HEK293 (cell line): ENCODE measurements at regions of chr9 and their contacts with region 1.

Region 1: GRCh38 chr9:137034863-137035761 is 3.2 kb upstream of the FUT7 start:
- H3K4me3 ChIP-seq: no peak overlapping the region
- H3K27ac ChIP-seq: no peak overlapping the region
- H3K4me1 ChIP-seq: no peaks in the 10 kb centered on the region
- CTCF ChIP-seq: peak; percentile 93

Region 2: GRCh38 chr9:136775191-136775590 is 259.9 kb before region 1 on chr9:
- CTCF ChIA-PET with region 1: interaction called, 14 read pairs
- POLR2A ChIA-PET with region 1: no interaction called
- H3K4me3 ChIP-seq: no peak overlapping the region
- H3K27ac ChIP-seq: no peak overlapping the region
- H3K4me1 ChIP-seq: no peaks in the 10 kb centered on the region
- CTCF ChIP-seq: no peak

Region 3: DNA sequence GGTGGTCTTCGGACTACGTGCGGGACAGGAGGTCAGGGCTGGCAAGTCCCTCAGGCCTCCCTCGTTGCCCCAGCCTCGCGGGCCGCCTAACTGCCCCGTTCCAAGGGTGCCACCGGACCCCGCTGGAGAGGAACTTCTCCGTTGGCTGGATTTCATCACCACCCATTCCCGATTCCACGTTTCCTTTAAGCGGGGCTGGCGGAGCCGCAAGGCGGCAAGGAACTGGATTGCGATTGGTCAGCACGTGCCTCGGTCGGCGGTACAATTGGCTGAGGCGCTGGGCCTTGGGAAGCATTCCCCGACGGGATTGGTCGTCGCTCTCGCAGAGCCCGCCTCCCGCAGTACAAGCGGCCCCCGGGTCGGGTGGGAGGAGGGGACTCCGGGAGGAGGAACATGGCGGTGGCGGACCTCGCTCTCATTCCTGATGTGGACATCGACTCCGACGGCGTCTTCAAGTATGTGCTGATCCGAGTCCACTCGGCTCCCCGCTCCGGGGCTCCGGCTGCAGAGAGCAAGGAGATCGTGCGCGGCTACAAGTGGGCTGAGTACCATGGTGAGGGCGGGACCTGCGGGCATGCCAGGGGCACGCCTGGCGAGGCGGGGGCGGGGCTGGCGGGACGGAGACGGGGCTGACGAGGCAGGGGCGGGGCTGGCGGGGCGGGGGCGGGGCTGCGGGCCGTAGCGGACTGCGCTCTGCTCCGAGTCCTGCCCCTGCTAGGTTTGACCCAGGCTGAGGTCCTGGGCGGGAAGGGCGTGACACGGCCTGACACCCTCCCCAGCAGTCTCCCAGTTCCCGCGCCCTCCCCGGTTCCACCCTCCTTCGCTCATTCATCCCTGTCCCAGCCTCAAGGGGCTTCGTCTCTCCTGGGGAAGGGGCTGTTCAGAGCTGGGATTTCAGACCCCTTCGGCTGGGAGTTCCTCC is 185.8 kb before region 1 on chr9 and contains the start of gene PHPT1:
- CTCF ChIA-PET with region 1: interaction called, 27 read pairs
- POLR2A ChIA-PET with region 1: interaction called, 4 read pairs
- H3K4me3 ChIP-seq: peak within 1 kb of the TSS; percentile 86
- H3K27ac ChIP-seq: peak within 1 kb of the TSS; percentile 94
- H3K4me1 ChIP-seq: 0 out of 2 replicates have a peak, but pooled peaks cover 4% of the 10 kb centered on the region
- CTCF ChIP-seq: no peak

Region 4: GRCh38 chr9:136949817-136950655 is 85.1 kb before region 1 on chr9:
- CTCF ChIA-PET with region 1: interaction called, 119 read pairs
- POLR2A ChIA-PET with region 1: interaction called, 16 read pairs
- H3K4me3 ChIP-seq: peak overlapping the region; percentile 55
- H3K27ac ChIP-seq: peak overlapping the region; percentile 76
- H3K4me1 ChIP-seq: no peaks in the 10 kb centered on the region; the same call in 1 of the 2 replicates
- CTCF ChIP-seq: peak; percentile 86

Region 5: DNA sequence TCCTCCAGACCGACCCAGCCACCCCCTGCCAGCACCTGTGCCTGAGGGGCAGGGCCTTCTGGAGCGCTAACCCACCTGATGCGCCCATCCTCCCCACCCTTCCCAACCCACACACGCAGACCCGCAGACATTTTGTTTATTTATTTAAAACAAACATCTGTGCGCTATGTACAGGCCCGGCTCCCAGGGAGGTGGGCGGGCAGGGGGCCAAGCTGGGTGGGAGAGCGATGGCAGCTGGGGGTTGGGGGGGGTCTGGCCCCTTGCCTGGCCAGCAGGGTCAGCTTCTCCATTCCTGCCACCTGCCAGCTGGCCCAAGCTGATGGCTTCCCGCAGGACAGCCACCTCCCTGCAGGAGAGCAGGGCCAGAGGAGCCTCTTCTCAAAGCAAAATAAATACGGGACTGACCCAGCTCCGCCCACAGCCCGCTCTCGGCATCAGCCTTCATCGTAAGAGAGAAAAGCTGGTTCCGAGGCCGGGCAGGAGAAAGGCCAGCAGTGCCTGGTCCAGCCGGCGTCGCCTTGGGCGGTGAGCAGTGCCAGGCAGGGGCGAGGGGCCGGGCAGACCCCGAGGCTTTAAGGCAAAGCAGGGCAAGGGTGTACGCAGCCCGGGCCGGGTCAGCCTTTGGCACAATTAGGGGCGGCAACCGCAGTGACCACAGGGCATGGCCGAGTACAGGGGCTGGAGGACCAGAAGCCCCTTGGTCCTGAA is 27.9 kb before region 1 on chr9:
- CTCF ChIA-PET with region 1: interaction called, 38 read pairs
- POLR2A ChIA-PET with region 1: interaction called, 3 read pairs
- H3K4me3 ChIP-seq: no peak overlapping the region
- H3K27ac ChIP-seq: no peak overlapping the region
- H3K4me1 ChIP-seq: peaks cover 3% of the 10 kb centered on the region; the same call in 1 of the 2 replicates
- CTCF ChIP-seq: no peak

Region 6: GRCh38 chr9:137046098-137046787 is 11.1 kb after region 1 on chr9 and contains the start of gene NPDC1:
- CTCF ChIA-PET with region 1: interaction called, 47 read pairs
- POLR2A ChIA-PET with region 1: interaction called, 8 read pairs
- H3K4me3 ChIP-seq: peak within 1 kb of the TSS; percentile 58
- H3K27ac ChIP-seq: peak within 1 kb of the TSS; percentile 79; the same call in 1 of the 2 replicates
- H3K4me1 ChIP-seq: peaks cover 5% of the 10 kb centered on the region; the same call in 1 of the 2 replicates
- CTCF ChIP-seq: peak; percentile 87

Region 7: DNA sequence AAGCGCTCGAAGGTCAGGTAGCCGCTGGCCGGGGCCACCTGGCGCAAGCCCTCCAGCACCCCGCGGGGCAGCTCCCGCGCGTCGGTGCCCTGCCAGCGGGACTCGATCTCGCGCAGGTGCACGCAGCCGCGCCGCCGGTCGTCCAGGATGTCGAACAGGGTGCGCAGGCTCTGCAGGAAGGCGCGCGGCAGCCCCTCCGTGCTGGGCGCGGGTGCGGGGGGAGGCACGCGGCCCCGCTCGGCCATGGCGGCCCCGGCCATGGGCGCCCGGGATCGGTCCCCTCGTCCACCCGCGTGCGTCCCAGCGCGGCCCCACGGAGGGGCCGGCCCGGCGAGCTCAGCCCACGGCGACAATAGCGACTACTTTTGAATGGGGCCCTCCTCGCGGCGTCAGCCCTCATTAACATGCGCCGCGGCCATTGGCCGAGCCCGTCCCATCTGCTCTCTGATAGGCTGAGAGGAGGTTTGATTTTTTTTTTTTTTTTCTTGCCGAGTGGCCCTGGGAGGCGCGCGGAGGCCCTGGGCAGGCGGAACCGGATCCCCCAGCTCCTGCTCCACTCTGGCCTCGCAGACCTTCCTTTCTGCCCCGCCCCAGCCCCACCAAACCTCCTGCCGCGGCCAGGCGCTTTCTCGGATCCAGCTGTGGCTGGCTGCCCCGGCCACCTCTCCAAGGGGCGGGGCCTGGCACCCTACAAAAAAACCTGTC is 35.2 kb after region 1 on chr9 and contains the start of gene SAPCD2:
- CTCF ChIA-PET with region 1: interaction called, 86 read pairs
- POLR2A ChIA-PET with region 1: interaction called, 3 read pairs
- H3K4me3 ChIP-seq: peak within 1 kb of the TSS; percentile 38
- H3K27ac ChIP-seq: peak within 1 kb of the TSS; percentile 71
- H3K4me1 ChIP-seq: peaks cover 10% of the 10 kb centered on the region; the same call in 1 of the 2 replicates
- CTCF ChIP-seq: no peak

Region 8: GRCh38 chr9:137186385-137186784 is 151.3 kb after region 1 on chr9:
- CTCF ChIA-PET with region 1: no interaction called
- POLR2A ChIA-PET with region 1: no interaction called
- H3K4me3 ChIP-seq: no peak overlapping the region
- H3K27ac ChIP-seq: no peak overlapping the region
- H3K4me1 ChIP-seq: peaks cover 11% of the 10 kb centered on the region
- CTCF ChIP-seq: no peak

Region 9: GRCh38 chr9:137269231-137269772 is 234.2 kb after region 1 on chr9:
- CTCF ChIA-PET with region 1: no interaction called
- POLR2A ChIA-PET with region 1: no interaction called
- H3K4me3 ChIP-seq: no peak overlapping the region
- H3K27ac ChIP-seq: no peak overlapping the region
- H3K4me1 ChIP-seq: no peaks in the 10 kb centered on the region
- CTCF ChIP-seq: no peak